ENCODE measurements at regions of chr19 and their contacts with region 1.

Region 1: GRCh38 chr19:15091901-15092753 is 10.1 kb downstream of the OR1I1 start:
- DNase-seq: no peak
- H3K4me3 ChIP-seq: no peak overlapping the region
- H3K27ac ChIP-seq: no peak overlapping the region
- H3K4me1 ChIP-seq: peaks cover 0 to 9% (median 6%) of the 10 kb centered on the region in 6 donors
- H3K27me3 ChIP-seq: peaks cover 0 to 68% (median 5%) of the 10 kb centered on the region in 7 donors
- CTCF ChIP-seq: peak; percentile 42 to 83 (median 67)
- POLR2A ChIP-seq: no peak

Region 2: DNA sequence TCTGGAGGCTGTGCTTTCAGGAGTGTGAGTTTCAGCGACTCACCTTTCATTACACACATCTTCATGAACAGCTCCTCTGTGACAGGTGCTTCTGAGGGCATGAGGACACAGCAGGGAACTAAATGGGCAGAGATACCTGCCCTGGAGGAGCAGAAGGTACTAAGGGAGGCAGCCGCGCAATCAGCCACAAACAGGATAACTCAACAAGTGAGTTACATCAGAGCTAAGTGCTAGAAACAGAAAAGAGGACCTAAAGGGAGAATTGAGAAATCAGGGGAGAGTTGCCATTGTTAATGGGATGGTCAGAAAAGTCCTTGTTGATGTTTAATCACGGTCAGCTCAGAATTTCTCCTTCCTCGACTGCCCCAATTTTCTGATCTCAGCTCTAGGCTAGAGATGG is 57.6 kb after region 1 on chr19:
- intact Hi-C with region 1: loop called (anchors 5 kb)
- DNase-seq: no peak
- H3K4me3 ChIP-seq: no peak overlapping the region
- H3K27ac ChIP-seq: no peak overlapping the region
- H3K4me1 ChIP-seq: peaks cover 0 to 12% (median 0%) of the 10 kb centered on the region in 6 donors
- H3K27me3 ChIP-seq: peaks cover 0 to 52% (median 3%) of the 10 kb centered on the region in 7 donors
- CTCF ChIP-seq: no peak
- POLR2A ChIP-seq: no peak

Measured in spleen (tissue), 13 donors.